K562 (cell line): ENCODE measurements at regions of chr4 and their contacts with region 1.

Region 1: GRCh38 chr4:138919094-138919936 is 96.3 kb upstream of the NOCT start:
- DNase-seq: peak; percentile 71 to 85 (median 80)
- ATAC-seq: peak; percentile 96
- H3K4me3 ChIP-seq: no peak overlapping the region
- H3K27ac ChIP-seq: no peak overlapping the region
- H3K4me1 ChIP-seq: no peaks in the 10 kb centered on the region; a peak in 2 of 5 replicates
- H3K27me3 ChIP-seq: no peaks in the 10 kb centered on the region
- CTCF ChIP-seq: peak; percentile 83 to 93 (median 93)
- EP300 ChIP-seq: no peak
- POLR2A ChIP-seq: no peak
- RAD21 ChIP-seq: peak; percentile 82 to 85

Region 2: DNA sequence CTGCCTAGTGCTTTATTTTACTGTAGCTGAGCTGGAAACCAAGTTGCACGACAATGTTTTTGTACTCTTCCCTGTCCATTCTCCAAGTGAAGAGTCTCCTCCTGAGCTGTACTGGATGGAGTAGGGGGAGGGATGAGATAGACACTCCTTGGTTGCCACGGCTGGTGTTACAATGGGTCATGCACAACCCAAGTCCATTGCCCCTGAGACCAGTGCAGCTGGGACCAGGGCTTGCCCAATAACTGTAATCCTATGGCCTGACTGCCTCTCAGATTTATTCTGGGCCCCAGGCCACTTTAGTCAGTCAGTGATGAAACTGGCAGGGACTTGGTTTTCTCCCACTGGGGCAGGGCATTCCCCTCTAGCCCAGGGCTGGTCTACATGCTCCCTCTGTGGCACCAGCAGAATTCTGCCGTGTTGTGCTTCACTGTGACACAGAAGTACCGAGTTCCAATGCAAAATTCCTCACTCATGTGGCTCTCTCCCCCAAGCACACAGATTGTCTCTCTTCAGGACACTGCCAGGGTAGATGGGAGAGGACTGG is 1183.7 kb before region 1 on chr4:
- CTCF ChIA-PET with region 1: no interaction called
- POLR2A ChIA-PET with region 1: no interaction called
- in situ Hi-C with region 1: no loop called
- intact Hi-C with region 1: loop called (anchors 1 kb)
- DNase-seq: no peak
- ATAC-seq: peak; percentile 27; the same call in 1 of the 3 replicates
- H3K4me3 ChIP-seq: no peak overlapping the region
- H3K27ac ChIP-seq: no peak overlapping the region
- H3K4me1 ChIP-seq: peaks cover 0 to 6% of the 10 kb centered on the region in 2 experiments; a peak in 1 of 5 replicates
- H3K27me3 ChIP-seq: no peaks in the 10 kb centered on the region
- CTCF ChIP-seq: no peak
- EP300 ChIP-seq: no peak
- POLR2A ChIP-seq: no peak
- RAD21 ChIP-seq: no peak

Region 3: GRCh38 chr4:138555584-138555983 is 363.7 kb before region 1 on chr4:
- CTCF ChIA-PET with region 1: no interaction called
- POLR2A ChIA-PET with region 1: no interaction called
- in situ Hi-C with region 1: no loop called
- intact Hi-C with region 1: loop called (anchors 5 kb)
- DNase-seq: peak in 2 of 4 experiments; percentile 17 to 53
- ATAC-seq: peak; percentile 95
- H3K4me3 ChIP-seq: no peak overlapping the region
- H3K27ac ChIP-seq: no peak overlapping the region
- H3K4me1 ChIP-seq: peaks cover 0 to 2% of the 10 kb centered on the region in 2 experiments; a peak in 2 of 5 replicates
- H3K27me3 ChIP-seq: no peaks in the 10 kb centered on the region; a peak in 1 of 5 replicates
- CTCF ChIP-seq: peak; percentile 61 to 73 (median 65)
- EP300 ChIP-seq: no peak
- POLR2A ChIP-seq: no peak
- RAD21 ChIP-seq: peak; percentile 38 to 57

Region 4: DNA sequence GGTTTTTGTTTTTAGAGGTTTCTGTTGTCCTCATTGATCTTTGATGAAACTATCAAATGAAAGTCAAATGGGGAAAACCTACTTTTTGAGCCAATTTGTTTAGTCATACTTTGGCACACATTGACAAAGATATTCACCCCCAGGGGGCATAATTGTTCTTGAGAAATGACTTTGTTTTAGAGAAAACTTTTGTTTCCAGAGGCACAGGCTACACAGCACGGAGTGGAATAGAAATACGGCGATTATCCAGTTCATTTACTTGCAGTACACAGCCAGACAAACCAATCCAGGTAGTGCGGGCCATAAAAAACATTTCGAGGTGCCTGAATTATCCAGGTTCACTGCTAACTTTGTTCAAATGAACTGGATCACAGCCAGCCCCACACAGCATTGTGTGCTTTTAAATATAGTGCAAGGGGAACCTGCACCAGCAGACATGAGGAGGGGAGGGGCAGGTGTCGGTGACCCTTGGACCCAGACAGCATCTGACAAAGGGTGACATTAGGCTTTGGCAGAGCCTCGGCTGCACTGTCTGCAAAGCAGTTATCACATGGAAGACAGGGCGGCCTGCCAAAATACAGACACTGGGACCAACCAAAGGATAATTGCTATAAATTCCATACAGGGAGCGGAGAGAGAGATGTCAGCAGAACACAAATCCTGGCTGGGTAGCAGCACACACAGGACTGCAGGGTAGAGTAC is 83.3 kb before region 1 on chr4:
- CTCF ChIA-PET with region 1: interaction called, 4 read pairs
- POLR2A ChIA-PET with region 1: no interaction called
- in situ Hi-C with region 1: no loop called
- intact Hi-C with region 1: loop called (anchors 2 kb)
- DNase-seq: peak in 2 of 4 experiments; percentile 10 to 13
- ATAC-seq: peak; percentile 38; the same call in 1 of the 3 replicates
- H3K4me3 ChIP-seq: no peak overlapping the region
- H3K27ac ChIP-seq: no peak overlapping the region
- H3K4me1 ChIP-seq: no peaks in the 10 kb centered on the region
- H3K27me3 ChIP-seq: peaks cover 16% of the 10 kb centered on the region in 2 experiments; a peak in 4 of 5 replicates
- CTCF ChIP-seq: peak in 2 of 3 experiments; percentile 5 to 12; a peak in 1 of 6 replicates
- EP300 ChIP-seq: no peak
- POLR2A ChIP-seq: no peak
- RAD21 ChIP-seq: no peak

Region 5: DNA sequence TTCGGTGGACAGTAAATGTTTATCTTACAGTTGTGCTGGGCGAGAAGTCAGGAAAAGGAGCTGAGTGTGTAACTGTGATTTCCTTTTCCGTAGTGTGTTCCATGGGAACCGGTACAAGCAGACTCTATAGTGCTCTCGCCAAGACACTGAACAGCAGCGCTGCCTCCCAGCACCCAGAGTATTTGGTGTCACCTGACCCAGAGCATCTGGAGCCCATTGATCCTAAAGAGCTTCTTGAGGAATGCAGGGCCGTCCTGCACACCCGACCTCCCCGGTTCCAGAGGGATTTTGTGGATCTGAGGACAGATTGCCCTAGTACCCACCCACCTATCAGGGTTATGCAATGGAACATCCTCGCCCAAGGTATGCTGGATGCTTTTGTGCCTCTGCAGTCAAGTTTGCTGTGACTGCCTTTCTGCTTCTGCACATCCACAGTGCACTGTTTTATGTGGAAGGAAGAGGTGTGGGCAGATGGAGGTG is 123.7 kb after region 1 on chr4:
- CTCF ChIA-PET with region 1: no interaction called
- POLR2A ChIA-PET with region 1: no interaction called
- in situ Hi-C with region 1: no loop called
- intact Hi-C with region 1: no loop called
- DNase-seq: no peak
- ATAC-seq: no peak
- H3K4me3 ChIP-seq: no peak overlapping the region
- H3K27ac ChIP-seq: no peak overlapping the region
- H3K4me1 ChIP-seq: no peaks in the 10 kb centered on the region
- H3K27me3 ChIP-seq: no peaks in the 10 kb centered on the region
- CTCF ChIP-seq: no peak
- EP300 ChIP-seq: no peak
- POLR2A ChIP-seq: no peak
- RAD21 ChIP-seq: no peak

Region 6: DNA sequence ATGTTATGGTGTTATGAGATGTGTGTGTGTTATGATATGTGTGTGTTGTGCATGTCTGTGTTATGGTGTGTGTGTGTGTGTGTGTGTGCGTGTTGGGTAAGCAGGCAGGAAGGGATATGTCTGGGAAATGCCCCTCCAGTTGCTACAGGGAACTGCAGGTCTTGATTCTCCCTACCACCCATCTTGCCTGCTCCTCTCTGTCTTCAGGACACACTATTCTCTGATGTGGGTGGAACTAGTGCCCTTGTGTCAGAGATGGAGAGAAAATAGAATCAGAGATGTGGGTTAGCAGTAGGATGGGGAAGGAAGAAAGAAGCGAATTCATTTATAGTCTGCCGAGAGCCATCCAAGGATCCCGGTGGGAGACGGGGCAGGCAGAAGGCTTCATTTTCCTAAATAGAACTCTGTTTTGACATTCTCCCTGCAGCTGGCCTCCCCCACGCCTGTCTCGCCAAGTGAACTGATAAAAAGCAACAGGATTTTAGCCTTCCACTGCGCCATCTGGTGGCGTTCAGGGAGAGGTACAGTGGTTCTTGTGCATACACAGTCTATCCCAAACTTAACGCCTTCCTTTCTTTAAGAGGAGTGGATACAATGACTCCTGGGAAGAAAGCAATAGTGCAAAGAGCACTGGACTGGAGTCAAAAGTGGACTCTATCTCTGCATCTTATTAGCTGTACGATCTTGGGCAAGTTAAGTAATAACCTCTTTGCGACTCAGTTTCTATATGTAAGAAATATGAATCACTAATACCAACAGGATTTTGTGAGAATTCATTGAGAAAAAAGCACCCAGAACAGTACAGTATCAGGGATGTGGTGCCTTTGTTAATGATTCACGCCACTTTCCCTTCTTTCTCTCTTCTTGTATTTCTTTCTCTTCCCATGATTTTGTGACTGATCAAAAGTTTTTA is 732.2 kb after region 1 on chr4:
- CTCF ChIA-PET with region 1: no interaction called
- POLR2A ChIA-PET with region 1: no interaction called
- in situ Hi-C with region 1: no loop called
- intact Hi-C with region 1: no loop called
- DNase-seq: peak; percentile 67 to 91 (median 72)
- ATAC-seq: peak; percentile 91
- H3K4me3 ChIP-seq: no peak overlapping the region
- H3K27ac ChIP-seq: no peak overlapping the region
- H3K4me1 ChIP-seq: peaks cover 0 to 3% of the 10 kb centered on the region in 2 experiments; a peak in 2 of 5 replicates
- H3K27me3 ChIP-seq: peaks cover 7 to 18% of the 10 kb centered on the region in 2 experiments; a peak in 4 of 5 replicates
- CTCF ChIP-seq: peak; percentile 87 to 93 (median 89)
- EP300 ChIP-seq: 0 out of 2 replicates have a peak, but pooled peaks have one; percentile 13
- POLR2A ChIP-seq: no peak
- RAD21 ChIP-seq: peak; percentile 80 to 85